ENCODE measurements at regions of chr20 and their contacts with region 1.

Region 1: GRCh38 chr20:44651684-44652423 is at the start of gene ADA:
- DNase-seq: peak; percentile 26 to 70 (median 48)
- ATAC-seq: peak; percentile 70
- H3K4me3 ChIP-seq: peak within 1 kb of the TSS; percentile 73
- H3K4me3 Mint-ChIP-seq: peak within 1 kb of the TSS; percentile 81 to 96 (median 94)
- H3K27ac ChIP-seq: peak within 1 kb of the TSS; percentile 73
- H3K27ac Mint-ChIP-seq: peak within 1 kb of the TSS; percentile 88 to 98 (median 95)
- H3K4me1 ChIP-seq: peaks cover 38 to 43% of the 10 kb centered on the region in 2 donors
- H3K4me1 Mint-ChIP-seq: peaks cover 40 to 57% (median 55%) of the 10 kb centered on the region in 7 donors
- H3K27me3 ChIP-seq: no peaks in the 10 kb centered on the region
- H3K27me3 Mint-ChIP-seq: no peaks in the 10 kb centered on the region
- total RNA-seq, gene ADA: 26.1 to 103 (median 28.2) TPM

Region 2: GRCh38 chr20:44615169-44615791 is 36.6 kb before region 1 on chr20:
- CTCF ChIA-PET with region 1: interaction called, 11 read pairs
- POLR2A ChIA-PET with region 1: interaction called, 122 read pairs
- intact Hi-C with region 1: loop called (anchors 2 to 5 kb)
- DNase-seq: peak in 1 of 9 donors; percentile 11
- ATAC-seq: no peak
- H3K4me3 ChIP-seq: no peak overlapping the region
- H3K4me3 Mint-ChIP-seq: peak overlapping the region; percentile 18 to 77 (median 70)
- H3K27ac ChIP-seq: peak overlapping the region; percentile 42
- H3K27ac Mint-ChIP-seq: peak overlapping the region; percentile 82 to 98 (median 95)
- H3K4me1 ChIP-seq: peaks cover 11 to 64% of the 10 kb centered on the region in 2 donors
- H3K4me1 Mint-ChIP-seq: peaks cover 46 to 81% (median 68%) of the 10 kb centered on the region in 7 donors
- H3K27me3 ChIP-seq: no peaks in the 10 kb centered on the region
- H3K27me3 Mint-ChIP-seq: no peaks in the 10 kb centered on the region

Region 3: GRCh38 chr20:44666066-44666465 is 14.2 kb after region 1 on chr20:
- CTCF ChIA-PET with region 1: interaction called, 6 read pairs
- POLR2A ChIA-PET with region 1: interaction called, 13 read pairs
- intact Hi-C with region 1: loop called (anchors 1 kb)
- DNase-seq: no peak
- ATAC-seq: no peak
- H3K4me3 ChIP-seq: no peak overlapping the region
- H3K4me3 Mint-ChIP-seq: no peak overlapping the region
- H3K27ac ChIP-seq: no peak overlapping the region
- H3K27ac Mint-ChIP-seq: peak overlapping the region in 2 of 9 donors; percentile 5 to 56
- H3K4me1 ChIP-seq: peaks cover 0 to 7% of the 10 kb centered on the region in 2 donors
- H3K4me1 Mint-ChIP-seq: peaks cover 12 to 29% (median 20%) of the 10 kb centered on the region in 7 donors
- H3K27me3 ChIP-seq: no peaks in the 10 kb centered on the region
- H3K27me3 Mint-ChIP-seq: no peaks in the 10 kb centered on the region

Region 4: GRCh38 chr20:44954166-44954565 is 302.3 kb after region 1 on chr20:
- CTCF ChIA-PET with region 1: no interaction called
- POLR2A ChIA-PET with region 1: no interaction called
- intact Hi-C with region 1: no loop called
- DNase-seq: no peak
- ATAC-seq: no peak
- H3K4me3 ChIP-seq: no peak overlapping the region
- H3K4me3 Mint-ChIP-seq: no peak overlapping the region
- H3K27ac ChIP-seq: no peak overlapping the region
- H3K27ac Mint-ChIP-seq: peak overlapping the region in 4 of 9 donors; percentile 7 to 54 (median 38)
- H3K4me1 ChIP-seq: peaks cover 11 to 12% of the 10 kb centered on the region in 2 donors
- H3K4me1 Mint-ChIP-seq: peaks cover 24 to 56% (median 43%) of the 10 kb centered on the region in 7 donors
- H3K27me3 ChIP-seq: no peaks in the 10 kb centered on the region
- H3K27me3 Mint-ChIP-seq: no peaks in the 10 kb centered on the region